Endothelial cell of umbilical vein (primary cell): ENCODE measurements at regions of chr11 and their contacts with region 1.

Region 1: DNA sequence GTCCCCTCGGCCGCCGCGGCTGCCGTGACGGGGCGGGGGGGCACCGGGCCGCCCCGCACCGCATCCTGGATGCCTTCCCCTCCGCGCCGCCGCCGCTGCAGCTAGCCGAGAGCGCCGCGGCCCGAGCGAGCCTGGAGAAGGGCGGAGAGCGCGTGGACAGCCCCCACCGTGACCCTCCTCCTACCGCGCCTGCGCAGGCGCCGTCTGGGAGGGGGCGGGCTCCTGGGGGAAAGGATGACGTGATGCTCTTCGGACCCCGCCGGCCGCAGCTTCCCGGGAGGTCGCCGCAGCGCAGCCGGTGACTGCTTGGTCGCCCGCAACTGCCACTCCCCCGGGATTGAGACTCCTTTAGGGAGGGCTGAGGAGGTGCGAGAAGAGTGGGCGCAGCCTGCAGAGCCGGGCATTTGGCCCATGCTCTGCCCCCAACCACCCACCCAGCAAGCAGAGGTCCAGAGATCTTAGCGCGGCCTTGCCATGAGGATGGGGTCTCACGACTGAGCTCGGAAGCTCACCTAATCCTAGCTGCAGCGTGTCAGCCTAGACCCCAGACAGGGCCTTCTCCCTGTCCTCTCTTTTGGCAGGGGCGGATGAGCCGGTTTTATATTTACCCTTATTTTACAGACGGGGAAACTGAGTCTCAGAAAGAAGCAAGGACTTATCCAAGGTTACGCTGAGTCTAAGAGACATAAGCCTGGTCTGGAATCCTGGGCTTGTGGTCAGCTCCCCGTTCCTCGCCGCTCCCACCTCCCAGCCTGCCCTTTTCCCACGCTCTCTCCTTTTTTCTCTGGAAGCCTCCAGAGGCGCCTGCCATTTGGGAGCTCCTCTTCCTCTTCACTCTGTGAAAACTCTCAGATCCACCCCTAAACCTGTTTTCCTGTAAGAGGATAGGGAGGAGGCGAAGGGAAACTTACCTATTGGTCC is at the start of gene DENND5A:
- DNase-seq: peak; percentile 90
- H3K4me3 ChIP-seq: peak within 1 kb of the TSS; percentile 71 to 83 (median 81)
- H3K27ac ChIP-seq: peak within 1 kb of the TSS; percentile 81
- H3K4me1 ChIP-seq: peaks cover 13% of the 10 kb centered on the region
- H3K27me3 ChIP-seq: no peaks in the 10 kb centered on the region
- CTCF ChIP-seq: no peak
- POLR2A ChIP-seq: peak; percentile 88
- total RNA-seq, gene DENND5A: 116 and 117 TPM in 2 replicates

Region 2: GRCh38 chr11:9170450-9170849 is 95.0 kb before region 1 on chr11:
- CTCF ChIA-PET with region 1: interaction called, 5 read pairs
- POLR2A ChIA-PET with region 1: no interaction called
- dilution Hi-C with region 1: no loop called
- intact Hi-C with region 1: loop called (anchors 5 kb)
- DNase-seq: peak; percentile 17
- H3K4me3 ChIP-seq: no peak overlapping the region
- H3K27ac ChIP-seq: no peak overlapping the region
- H3K4me1 ChIP-seq: peaks cover 14% of the 10 kb centered on the region
- H3K27me3 ChIP-seq: no peaks in the 10 kb centered on the region
- CTCF ChIP-seq: no peak
- POLR2A ChIP-seq: no peak

Region 3: DNA sequence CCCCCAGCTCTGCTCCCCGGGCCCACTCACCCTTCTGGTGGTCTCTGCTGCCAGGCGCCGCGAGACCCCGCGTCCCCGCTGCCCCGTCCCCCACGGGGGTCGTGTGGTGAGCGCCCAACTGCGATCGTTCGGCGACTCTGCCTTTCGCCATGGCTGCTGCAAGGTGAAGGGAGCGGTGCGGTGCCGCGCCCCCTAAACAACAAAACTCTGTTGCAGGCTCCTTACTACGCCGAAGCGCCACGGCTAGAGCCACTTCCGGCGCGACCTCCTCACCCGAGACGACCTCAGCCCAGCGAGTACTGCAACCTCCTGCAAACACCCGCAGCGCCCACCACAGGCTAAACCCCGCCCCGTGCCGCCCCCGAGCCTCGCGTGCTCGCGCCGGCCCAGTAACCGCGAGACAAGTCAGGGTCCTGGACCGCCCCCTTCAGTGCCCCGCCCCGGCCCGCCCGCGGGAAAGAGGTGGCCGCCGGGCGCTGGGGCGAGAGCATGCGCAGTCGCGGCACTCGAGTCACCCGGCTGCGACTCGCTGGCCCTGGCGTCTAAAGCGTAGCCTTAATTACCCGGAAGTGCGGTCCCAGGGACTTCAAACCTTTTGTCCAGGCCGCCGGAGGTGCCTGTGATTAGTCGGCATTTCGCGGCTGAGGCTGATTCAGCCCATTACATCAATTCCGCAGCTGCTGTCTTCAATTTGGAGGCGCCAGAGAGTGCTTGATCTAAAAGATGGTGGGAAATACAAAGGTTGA is 49.0 kb after region 1 on chr11 and contains the start of gene TMEM41B:
- CTCF ChIA-PET with region 1: interaction called, 4 read pairs
- POLR2A ChIA-PET with region 1: no interaction called
- dilution Hi-C with region 1: no loop called
- intact Hi-C with region 1: loop called (anchors 5 kb)
- DNase-seq: peak; percentile 98
- H3K4me3 ChIP-seq: peak within 1 kb of the TSS; percentile 60 to 98 (median 93)
- H3K27ac ChIP-seq: peak within 1 kb of the TSS; percentile 87
- H3K4me1 ChIP-seq: peaks cover 15% of the 10 kb centered on the region
- H3K27me3 ChIP-seq: no peaks in the 10 kb centered on the region
- CTCF ChIP-seq: no peak
- POLR2A ChIP-seq: peak; percentile 80
- total RNA-seq, gene TMEM41B: 38.6 and 39.0 TPM in 2 replicates

Region 4: GRCh38 chr11:9384535-9385303 is 119.2 kb after region 1 on chr11 and contains the start of gene IPO7:
- CTCF ChIA-PET with region 1: interaction called, 9 read pairs
- POLR2A ChIA-PET with region 1: interaction called, 3 read pairs
- dilution Hi-C with region 1: no loop called
- intact Hi-C with region 1: loop called (anchors 2 kb)
- DNase-seq: peak; percentile 90
- H3K4me3 ChIP-seq: peak within 1 kb of the TSS; percentile 65 to 90 (median 68)
- H3K27ac ChIP-seq: peak within 1 kb of the TSS; percentile 76
- H3K4me1 ChIP-seq: peaks cover 18% of the 10 kb centered on the region
- H3K27me3 ChIP-seq: no peaks in the 10 kb centered on the region
- CTCF ChIP-seq: peak; percentile 42 to 49
- POLR2A ChIP-seq: peak; percentile 86
- total RNA-seq, gene IPO7: 161 and 170 TPM in 2 replicates

Region 5: DNA sequence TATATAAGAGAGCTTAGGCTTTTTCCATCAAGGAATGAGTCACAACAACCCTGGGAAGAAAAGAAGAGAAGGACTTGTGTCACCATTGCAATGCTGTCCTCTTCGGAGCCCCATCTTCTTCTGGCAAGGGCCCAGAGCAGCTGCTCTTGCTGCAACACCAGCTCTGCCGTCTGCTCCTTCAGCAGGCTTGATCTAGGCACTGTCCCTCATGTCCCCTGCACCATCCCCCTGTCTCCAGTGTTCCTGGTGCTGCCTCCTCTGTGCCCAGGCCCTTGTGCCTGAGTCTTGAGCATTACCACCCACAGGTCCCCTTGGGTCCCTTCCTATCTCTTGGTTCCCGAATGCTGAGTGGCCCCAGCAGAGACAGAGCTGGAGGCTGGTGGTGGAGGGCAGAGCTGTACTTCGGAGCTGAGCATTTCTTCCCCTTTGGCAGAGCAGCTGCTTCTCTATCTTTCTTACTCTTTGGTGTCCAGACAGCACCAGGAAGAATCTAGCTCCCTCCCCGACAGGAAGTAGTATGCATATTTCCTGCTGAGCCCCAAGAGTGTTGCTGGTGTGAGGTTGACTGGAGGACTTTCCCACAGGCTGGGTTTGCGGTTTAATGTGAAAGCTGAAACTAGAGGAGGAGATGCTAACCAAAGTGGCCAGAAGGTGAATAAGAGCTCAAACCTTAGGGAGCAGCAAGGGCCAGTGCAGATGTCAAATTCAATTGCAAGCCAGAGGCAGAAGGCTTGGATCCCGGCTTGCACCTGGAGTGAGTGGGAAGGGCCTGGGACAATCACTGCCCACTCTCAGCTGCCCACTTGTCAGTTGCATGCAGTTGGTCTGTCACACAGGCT is 335.8 kb after region 1 on chr11:
- CTCF ChIA-PET with region 1: no interaction called
- POLR2A ChIA-PET with region 1: no interaction called
- dilution Hi-C with region 1: no loop called
- intact Hi-C with region 1: no loop called
- DNase-seq: no peak
- H3K4me3 ChIP-seq: no peak overlapping the region
- H3K27ac ChIP-seq: no peak overlapping the region
- H3K4me1 ChIP-seq: peaks cover 3% of the 10 kb centered on the region
- H3K27me3 ChIP-seq: no peaks in the 10 kb centered on the region
- CTCF ChIP-seq: no peak
- POLR2A ChIP-seq: no peak